ENCODE measurements at regions of chr4 and their contacts with region 1.

Region 1: DNA sequence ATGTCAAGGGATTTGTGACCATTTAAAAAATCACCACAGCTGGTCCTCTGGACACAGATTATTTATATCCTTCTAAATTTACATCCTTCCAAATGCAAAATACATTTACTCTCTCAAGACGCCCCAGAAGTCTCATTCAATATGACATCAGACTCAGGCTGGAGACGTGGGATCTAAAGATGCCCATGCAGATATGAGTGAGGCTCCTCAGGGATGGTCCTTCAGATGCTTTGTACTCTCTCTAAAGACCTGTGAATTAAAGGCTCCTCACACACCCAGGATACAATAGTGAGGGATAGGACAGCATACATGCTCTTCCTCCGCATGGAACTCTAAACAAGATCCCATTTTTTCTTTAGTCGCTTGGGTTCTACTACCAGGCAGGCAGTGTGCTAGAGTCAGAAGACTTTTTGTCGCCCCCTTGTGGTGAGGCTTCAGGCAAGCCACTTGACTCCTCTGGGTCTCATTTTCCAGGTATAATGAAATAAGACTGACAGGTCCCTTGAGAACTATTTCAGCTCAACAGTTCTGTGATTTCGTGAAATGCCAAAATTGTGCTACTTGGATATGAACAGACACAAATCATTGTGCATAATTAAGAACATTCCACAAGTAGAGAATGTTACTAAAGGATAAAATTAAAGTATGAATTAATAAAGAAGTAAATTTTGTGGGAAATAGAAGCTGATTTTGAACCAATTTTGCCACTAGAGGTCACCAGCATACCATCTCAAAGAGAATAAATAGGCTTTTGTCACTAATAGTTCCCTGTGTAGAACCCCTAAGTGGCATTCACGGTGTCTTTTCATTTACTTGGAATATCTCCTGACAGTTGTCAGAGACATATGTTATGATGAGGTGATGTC is 13.7 kb upstream of the SCOC start:
- DNase-seq: peak; percentile 89
- ATAC-seq: peak; percentile 97
- H3K4me3 Mint-ChIP-seq: no peak overlapping the region
- H3K27ac Mint-ChIP-seq: no peak overlapping the region
- H3K4me1 Mint-ChIP-seq: no peaks in the 10 kb centered on the region
- H3K27me3 Mint-ChIP-seq: peaks cover 3% of the 10 kb centered on the region

Region 2: DNA sequence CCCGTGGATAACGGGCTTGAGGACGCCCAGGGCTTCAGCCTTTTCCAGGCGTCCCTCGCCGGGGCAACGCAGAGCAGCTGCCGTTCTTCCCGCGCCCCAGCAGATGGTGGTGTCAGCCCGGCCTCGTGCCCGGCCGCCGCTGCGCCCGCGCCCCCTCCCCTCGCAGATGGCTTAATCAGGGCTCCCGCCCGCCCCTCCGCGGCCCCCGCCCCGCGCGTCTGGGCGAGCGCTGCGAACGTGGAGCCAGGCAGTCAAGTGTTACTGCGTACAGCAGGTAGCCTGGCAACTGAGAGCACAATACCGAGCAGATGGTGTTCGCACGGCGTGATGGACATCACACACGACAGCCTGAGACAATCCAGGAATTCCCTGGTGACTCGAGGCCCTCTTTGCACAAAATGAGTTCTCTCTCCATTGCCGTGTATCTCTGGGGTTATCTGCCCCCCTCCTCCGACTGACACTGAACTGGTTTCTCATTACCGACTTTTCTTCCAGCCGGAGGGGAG is 624.9 kb before region 1 on chr4:
- CTCF ChIA-PET with region 1: interaction called, 8 read pairs
- POLR2A ChIA-PET with region 1: no interaction called
- intact Hi-C with region 1: loop called (anchors 1 to 2 kb)
- DNase-seq: peak; percentile 86
- ATAC-seq: peak; percentile 83
- H3K4me3 Mint-ChIP-seq: peak overlapping the region; percentile 65
- H3K27ac Mint-ChIP-seq: no peak overlapping the region
- H3K4me1 Mint-ChIP-seq: peaks cover 13% of the 10 kb centered on the region
- H3K27me3 Mint-ChIP-seq: peaks cover 33% of the 10 kb centered on the region

Region 3: DNA sequence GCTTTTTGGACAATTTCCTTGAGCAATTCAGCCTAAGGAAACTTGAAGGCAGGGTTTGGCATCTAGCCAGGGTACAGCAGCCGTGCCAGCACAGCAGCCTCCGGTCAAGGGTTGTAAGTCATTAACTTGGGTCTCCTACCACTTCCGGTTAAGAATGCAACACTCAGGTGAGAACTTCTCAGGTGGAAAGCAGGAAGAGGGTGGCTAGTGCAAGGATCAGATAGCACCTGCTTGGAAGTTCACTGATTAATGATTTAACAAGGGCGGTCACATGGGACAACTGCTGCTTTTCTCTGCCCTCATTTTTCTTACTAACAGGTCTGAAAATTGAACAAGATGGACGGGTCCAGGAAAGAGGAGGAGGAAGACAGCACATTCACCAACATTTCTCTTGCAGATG is 16.5 kb before region 1 on chr4:
- CTCF ChIA-PET with region 1: interaction called, 29 read pairs
- POLR2A ChIA-PET with region 1: no interaction called
- intact Hi-C with region 1: no loop called
- DNase-seq: no peak
- ATAC-seq: no peak
- H3K4me3 Mint-ChIP-seq: no peak overlapping the region
- H3K27ac Mint-ChIP-seq: no peak overlapping the region
- H3K4me1 Mint-ChIP-seq: peaks cover 3% of the 10 kb centered on the region
- H3K27me3 Mint-ChIP-seq: peaks cover 8% of the 10 kb centered on the region

Region 4: DNA sequence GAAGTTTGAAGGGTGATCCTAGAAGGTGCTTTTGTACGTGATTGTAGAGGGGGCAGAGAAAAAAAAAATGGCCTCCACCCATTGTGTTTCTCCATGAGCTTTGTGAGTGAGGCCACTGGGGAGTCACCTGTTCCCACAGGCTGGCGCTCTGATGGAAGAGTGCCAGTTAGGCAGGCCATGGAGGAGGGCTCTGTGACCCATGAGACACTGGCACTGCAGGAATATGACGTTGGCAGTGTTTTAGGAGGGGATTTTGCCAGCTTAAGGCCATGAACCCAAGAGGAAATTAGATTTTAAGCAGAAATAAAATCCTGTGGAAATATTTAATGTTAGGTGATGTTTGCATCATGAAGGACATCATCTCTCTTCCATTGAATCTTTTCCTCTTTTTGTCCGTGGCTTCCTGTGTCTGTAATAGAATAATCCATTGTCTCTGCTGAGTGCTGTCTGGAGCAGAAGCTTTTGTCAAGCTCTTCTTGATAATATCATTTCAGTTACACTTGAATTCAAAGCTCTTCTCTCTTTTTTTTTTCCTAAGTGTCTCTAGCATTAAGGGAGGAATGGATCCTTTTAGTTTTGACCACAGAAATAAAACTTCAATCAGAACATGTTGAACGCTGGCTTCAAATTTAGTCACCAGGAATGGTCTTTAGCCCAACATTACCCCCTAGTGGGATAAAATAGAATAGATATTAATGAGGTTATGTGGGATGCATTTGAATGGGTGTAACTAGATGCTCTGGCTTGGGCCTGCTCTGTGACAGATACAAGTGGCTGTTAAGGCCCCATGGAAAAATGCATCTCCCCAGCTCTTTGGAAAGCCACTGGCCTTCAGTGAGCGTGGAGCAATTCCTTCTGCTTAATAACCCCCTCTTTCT is 250.0 kb after region 1 on chr4:
- CTCF ChIA-PET with region 1: interaction called, 32 read pairs
- POLR2A ChIA-PET with region 1: interaction called, 5 read pairs
- intact Hi-C with region 1: loop called (anchors 1 kb)
- DNase-seq: no peak
- ATAC-seq: peak; percentile 71
- H3K4me3 Mint-ChIP-seq: no peak overlapping the region
- H3K27ac Mint-ChIP-seq: no peak overlapping the region
- H3K4me1 Mint-ChIP-seq: no peaks in the 10 kb centered on the region
- H3K27me3 Mint-ChIP-seq: no peaks in the 10 kb centered on the region

Region 5: GRCh38 chr4:140851032-140851636 is 491.3 kb after region 1 on chr4:
- CTCF ChIA-PET with region 1: interaction called, 4 read pairs
- POLR2A ChIA-PET with region 1: no interaction called
- intact Hi-C with region 1: loop called (anchors 1 to 2 kb)
- DNase-seq: peak; percentile 37
- ATAC-seq: no peak
- H3K4me3 Mint-ChIP-seq: no peak overlapping the region
- H3K27ac Mint-ChIP-seq: no peak overlapping the region
- H3K4me1 Mint-ChIP-seq: no peaks in the 10 kb centered on the region
- H3K27me3 Mint-ChIP-seq: peaks cover 18% of the 10 kb centered on the region

Measured in activated CD4-positive, alpha-beta T cell treated with anti-CD3 and anti-CD28 coated beads for 36 hours (primary cell).